ENCODE measurements at regions of chr13 and their contacts with region 1.

Region 1: GRCh38 chr13:69450245-69450644 is 657.4 kb upstream of the ATXN8OS start:
- DNase-seq: no peak
- H3K4me3 ChIP-seq: no peak overlapping the region
- H3K27ac ChIP-seq: no peak overlapping the region
- H3K4me1 ChIP-seq: no peaks in the 10 kb centered on the region
- H3K27me3 ChIP-seq: no peaks in the 10 kb centered on the region

Region 2: GRCh38 chr13:68982961-68983619 is 467.2 kb before region 1 on chr13:
- in situ Hi-C with region 1: no loop called
- DNase-seq: no peak
- H3K4me3 ChIP-seq: no peak overlapping the region
- H3K27ac ChIP-seq: no peak overlapping the region
- H3K4me1 ChIP-seq: no peaks in the 10 kb centered on the region
- H3K27me3 ChIP-seq: no peaks in the 10 kb centered on the region

Region 3: GRCh38 chr13:69389899-69390298 is 60.3 kb before region 1 on chr13:
- in situ Hi-C with region 1: loop called (anchors 10 kb)
- DNase-seq: no peak
- H3K4me3 ChIP-seq: no peak overlapping the region
- H3K27ac ChIP-seq: no peak overlapping the region
- H3K4me1 ChIP-seq: no peaks in the 10 kb centered on the region
- H3K27me3 ChIP-seq: no peaks in the 10 kb centered on the region